H1 (cell line): ENCODE measurements at regions of chr2 and their contacts with region 1.

Region 1: GRCh38 chr2:25376750-25377621 is 35.3 kb upstream of the DNMT3A start:
- DNase-seq: peak; percentile 72 to 97
- H3K4me3 ChIP-seq: peak overlapping the region in 3 of 4 experiments; percentile 9 to 48 (median 16); a peak in 4 of 8 replicates
- H3K27ac ChIP-seq: peak overlapping the region; percentile 3; the same call in 1 of the 2 replicates
- H3K4me1 ChIP-seq: peaks cover 0 to 14% (median 13%) of the 10 kb centered on the region in 4 experiments; a peak in 5 of 7 replicates
- H3K27me3 ChIP-seq: peaks cover 0 to 8% (median 0%) of the 10 kb centered on the region in 4 experiments; a peak in 5 of 7 replicates
- CTCF ChIP-seq: peak in 2 of 3 experiments; percentile 95 to 98; a peak in 3 of 4 replicates
- EP300 ChIP-seq: peak in 1 of 2 experiments; percentile 30; a peak in 1 of 3 replicates
- POLR2A ChIP-seq: 0 out of 3 replicates have a peak, but pooled peaks of 1 of the 2 experiments have one; percentile 13
- RAD21 ChIP-seq: peak; percentile 58 to 74

Region 2: GRCh38 chr2:25276569-25277465 is 100.2 kb before region 1 on chr2:
- CTCF ChIA-PET with region 1: interaction called, 16 read pairs
- POLR2A ChIA-PET with region 1: no interaction called
- DNase-seq: peak in 1 of 2 experiments; percentile 94
- H3K4me3 ChIP-seq: peak overlapping the region; percentile 13 to 59 (median 26); a peak in 6 of 8 replicates
- H3K27ac ChIP-seq: no peak overlapping the region
- H3K4me1 ChIP-seq: peaks cover 3 to 33% (median 16%) of the 10 kb centered on the region in 4 experiments
- H3K27me3 ChIP-seq: no peaks in the 10 kb centered on the region
- CTCF ChIP-seq: peak; percentile 70 to 87 (median 71)
- EP300 ChIP-seq: no peak
- POLR2A ChIP-seq: no peak
- RAD21 ChIP-seq: peak; percentile 22 to 66; a peak in 3 of 4 replicates

Region 3: DNA sequence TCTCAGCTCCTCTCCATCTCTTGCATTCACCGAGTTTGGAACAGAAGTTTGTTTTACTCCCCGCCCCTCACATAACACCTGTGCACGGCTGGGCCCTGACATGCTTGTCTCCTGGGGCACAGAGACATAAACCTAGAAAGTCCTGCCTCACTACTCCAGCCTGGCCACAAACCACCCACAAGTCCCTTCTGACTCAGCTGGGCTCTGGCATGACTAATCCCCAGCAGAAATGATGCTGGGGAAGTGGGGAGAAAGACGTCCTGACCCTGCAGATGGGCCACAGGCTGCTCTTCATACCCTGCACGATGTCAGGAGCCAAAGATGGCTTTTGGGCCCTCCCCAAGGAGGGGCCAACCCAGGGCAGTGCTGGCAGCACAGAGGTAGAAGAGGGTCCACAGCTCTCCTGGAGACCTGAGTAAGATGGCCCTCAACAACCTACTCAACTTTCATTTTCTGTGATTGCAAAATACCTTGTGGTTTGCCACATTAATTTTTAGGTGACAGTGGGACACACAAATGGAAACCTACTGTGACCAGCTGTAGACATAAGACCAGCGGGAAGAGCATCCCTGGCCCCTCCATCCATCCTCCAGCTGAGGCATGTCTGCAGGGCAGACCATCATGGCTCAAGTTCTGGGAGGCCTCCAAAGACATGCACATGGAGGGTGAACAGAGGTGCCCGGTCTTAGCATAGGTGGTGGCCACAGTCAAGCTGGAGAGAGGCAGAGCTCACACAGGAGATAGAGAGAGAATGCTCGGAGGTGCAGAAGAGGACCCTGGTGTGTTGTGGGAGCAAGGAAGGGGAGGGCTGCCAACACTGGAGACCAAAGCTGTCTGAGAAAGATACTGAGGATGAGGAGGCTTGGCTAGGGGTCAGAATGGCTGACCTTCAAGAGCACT is 75.3 kb before region 1 on chr2:
- CTCF ChIA-PET with region 1: interaction called, 16 read pairs
- POLR2A ChIA-PET with region 1: no interaction called
- DNase-seq: no peak
- H3K4me3 ChIP-seq: no peak overlapping the region
- H3K27ac ChIP-seq: no peak overlapping the region
- H3K4me1 ChIP-seq: peaks cover 2 to 13% (median 9%) of the 10 kb centered on the region in 4 experiments; a peak in 5 of 7 replicates
- H3K27me3 ChIP-seq: no peaks in the 10 kb centered on the region
- CTCF ChIP-seq: no peak
- EP300 ChIP-seq: no peak
- POLR2A ChIP-seq: no peak
- RAD21 ChIP-seq: no peak

Region 4: DNA sequence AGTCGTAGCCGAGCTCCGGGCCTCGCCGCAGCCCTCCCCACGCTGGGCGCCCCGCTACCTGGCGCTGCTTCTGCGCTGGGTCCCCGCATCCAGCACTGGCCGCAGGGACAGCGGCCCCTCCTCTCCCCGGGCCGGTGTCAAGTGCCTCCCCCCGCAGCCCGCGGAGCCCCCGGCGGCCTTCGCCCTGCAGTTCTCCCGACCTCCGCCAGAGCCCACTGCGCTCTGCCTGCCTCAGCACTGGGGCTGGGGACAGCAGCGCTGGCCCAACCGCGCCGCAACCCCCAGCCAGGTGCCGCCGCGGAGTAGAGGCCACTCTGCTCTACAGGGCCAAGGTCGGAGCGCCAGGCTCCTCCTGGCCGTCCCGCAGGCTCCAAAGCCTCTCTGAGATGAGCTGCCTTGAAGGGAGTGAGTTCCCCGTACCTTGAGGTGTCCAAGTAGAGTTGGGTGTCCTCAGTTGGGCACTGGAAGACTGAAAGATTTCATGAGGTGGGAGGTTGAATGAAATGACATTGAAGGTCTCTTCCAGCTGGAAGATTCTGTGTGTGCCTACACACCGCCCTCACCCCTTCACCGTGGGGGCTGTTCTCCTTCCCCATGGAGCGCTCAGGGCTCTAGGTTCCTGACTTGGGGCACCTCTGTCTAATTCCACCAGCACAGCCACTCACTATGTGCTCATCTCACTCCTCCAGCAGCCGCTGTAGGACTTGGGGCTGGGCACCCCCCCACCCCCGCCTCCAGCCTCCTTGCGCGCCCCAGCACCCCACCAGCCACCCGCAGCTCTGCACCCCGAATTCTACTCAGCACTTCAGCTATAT is 34.4 kb before region 1 on chr2:
- CTCF ChIA-PET with region 1: interaction called, 23 read pairs
- POLR2A ChIA-PET with region 1: interaction called, 4 read pairs
- DNase-seq: peak; percentile 77 to 93
- H3K4me3 ChIP-seq: peak overlapping the region; percentile 37 to 64 (median 48); a peak in 7 of 8 replicates
- H3K27ac ChIP-seq: no peak overlapping the region
- H3K4me1 ChIP-seq: peaks cover 0 to 20% (median 10%) of the 10 kb centered on the region in 4 experiments; a peak in 5 of 7 replicates
- H3K27me3 ChIP-seq: peaks cover 0 to 18% (median 11%) of the 10 kb centered on the region in 4 experiments; a peak in 6 of 7 replicates
- CTCF ChIP-seq: peak in 2 of 3 experiments; percentile 95 to 96; a peak in 3 of 4 replicates
- EP300 ChIP-seq: peak in 1 of 2 experiments; percentile 15; a peak in 2 of 3 replicates
- POLR2A ChIP-seq: no peak
- RAD21 ChIP-seq: peak; percentile 80 to 86

Region 5: GRCh38 chr2:25362049-25362433 is 14.9 kb before region 1 on chr2:
- CTCF ChIA-PET with region 1: interaction called, 108 read pairs
- POLR2A ChIA-PET with region 1: interaction called, 11 read pairs
- DNase-seq: peak; percentile 88 to 100
- H3K4me3 ChIP-seq: peak overlapping the region in 1 of 4 experiments; percentile 44; a peak in 3 of 8 replicates
- H3K27ac ChIP-seq: no peak overlapping the region
- H3K4me1 ChIP-seq: peaks cover 0 to 9% (median 5%) of the 10 kb centered on the region in 4 experiments; a peak in 6 of 7 replicates
- H3K27me3 ChIP-seq: peaks cover 0 to 31% (median 22%) of the 10 kb centered on the region in 4 experiments; a peak in 6 of 7 replicates
- CTCF ChIP-seq: peak; percentile 85 to 96 (median 90)
- EP300 ChIP-seq: no peak
- POLR2A ChIP-seq: no peak
- RAD21 ChIP-seq: peak; percentile 43 to 54

Region 6: DNA sequence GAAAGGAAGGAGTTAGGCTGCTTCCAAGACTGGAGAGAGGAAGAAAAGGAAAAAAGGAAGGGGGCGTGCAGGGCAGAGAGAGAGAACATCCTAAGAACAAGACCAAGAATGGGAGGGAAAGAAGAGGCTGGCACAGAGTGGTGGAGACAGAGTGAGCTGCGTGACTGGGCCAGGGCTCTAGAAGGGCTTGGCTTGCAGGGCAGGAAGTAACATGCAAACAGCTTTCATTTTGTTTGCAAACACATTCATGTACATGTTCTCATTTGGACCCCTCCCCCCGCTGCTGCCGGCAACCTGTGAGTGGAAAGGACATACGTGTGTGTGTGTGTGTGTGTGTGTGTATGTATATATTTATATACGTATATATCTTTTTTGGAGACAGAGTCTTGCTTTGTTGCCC is 11.5 kb after region 1 on chr2:
- CTCF ChIA-PET with region 1: interaction called, 39 read pairs
- POLR2A ChIA-PET with region 1: no interaction called
- DNase-seq: no peak
- H3K4me3 ChIP-seq: no peak overlapping the region
- H3K27ac ChIP-seq: no peak overlapping the region
- H3K4me1 ChIP-seq: peaks cover 0 to 3% (median 0%) of the 10 kb centered on the region in 4 experiments; a peak in 1 of 7 replicates
- H3K27me3 ChIP-seq: no peaks in the 10 kb centered on the region
- CTCF ChIP-seq: no peak
- EP300 ChIP-seq: no peak
- POLR2A ChIP-seq: no peak
- RAD21 ChIP-seq: no peak

Region 7: GRCh38 chr2:25521665-25522387 is 144.8 kb after region 1 on chr2:
- CTCF ChIA-PET with region 1: no interaction called
- POLR2A ChIA-PET with region 1: no interaction called
- DNase-seq: no peak
- H3K4me3 ChIP-seq: no peak overlapping the region
- H3K27ac ChIP-seq: no peak overlapping the region
- H3K4me1 ChIP-seq: no peaks in the 10 kb centered on the region
- H3K27me3 ChIP-seq: no peaks in the 10 kb centered on the region
- CTCF ChIP-seq: peak in 2 of 3 experiments; percentile 28 to 63; a peak in 2 of 4 replicates
- EP300 ChIP-seq: no peak
- POLR2A ChIP-seq: no peak
- RAD21 ChIP-seq: peak; percentile 65 to 67